ENCODE measurements at regions of chr7 and their contacts with region 1.

Region 1: GRCh38 chr7:95916573-95917297 is 144.4 kb downstream of the DYNC1I1 start:
- DNase-seq: peak; percentile 73 to 80
- ATAC-seq: peak; percentile 61 to 86 (median 68)
- H3K4me3 ChIP-seq: no peak overlapping the region
- H3K27ac ChIP-seq: no peak overlapping the region
- H3K4me1 ChIP-seq: no peaks in the 10 kb centered on the region
- H3K27me3 ChIP-seq: peaks cover 0 to 2% (median 0%) of the 10 kb centered on the region in 3 donors
- CTCF ChIP-seq: peak; percentile 95

Region 2: DNA sequence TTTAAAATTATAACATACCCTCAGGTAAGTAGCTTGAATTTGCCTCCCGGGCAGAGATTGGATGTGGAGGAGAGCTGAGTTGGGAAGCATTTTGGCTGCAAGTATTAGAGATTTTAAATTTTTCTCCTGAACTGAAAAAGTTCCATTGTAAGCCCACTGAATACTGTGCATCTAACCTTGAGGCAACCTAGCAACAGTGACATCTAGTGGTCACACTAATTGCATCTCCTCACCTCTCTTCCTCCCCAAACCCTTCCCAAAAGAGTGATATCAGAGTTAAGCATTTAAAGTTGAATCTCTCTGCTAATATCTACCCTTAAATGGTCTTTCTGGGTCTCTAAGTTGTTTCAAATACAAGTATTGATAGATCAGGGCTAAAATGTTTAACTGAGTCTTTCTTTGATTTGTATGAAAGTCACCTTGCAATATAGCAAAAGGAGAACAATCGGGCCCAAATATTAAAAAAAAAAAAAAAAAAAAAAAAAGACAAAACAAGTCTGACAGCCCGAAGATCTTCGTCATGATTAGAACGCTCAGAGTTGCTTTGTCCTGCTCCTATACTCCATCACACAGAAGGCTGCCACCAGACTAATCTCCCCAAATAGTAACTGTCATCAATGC is 1148.3 kb after region 1 on chr7:
- intact Hi-C with region 1: loop called in 1 of 2 experiments (anchors 5 kb)
- DNase-seq: no peak
- ATAC-seq: peak in 2 of 4 donors; percentile 48 to 70
- H3K4me3 ChIP-seq: no peak overlapping the region
- H3K27ac ChIP-seq: no peak overlapping the region
- H3K4me1 ChIP-seq: no peaks in the 10 kb centered on the region
- H3K27me3 ChIP-seq: peaks cover 0 to 3% (median 0%) of the 10 kb centered on the region in 3 donors
- CTCF ChIP-seq: peak; percentile 64

Measured in psoas muscle (tissue), 8 donors.